Prostate gland (tissue), 2 donors: ENCODE measurements at regions of chr1 and their contacts with region 1.

Region 1: DNA sequence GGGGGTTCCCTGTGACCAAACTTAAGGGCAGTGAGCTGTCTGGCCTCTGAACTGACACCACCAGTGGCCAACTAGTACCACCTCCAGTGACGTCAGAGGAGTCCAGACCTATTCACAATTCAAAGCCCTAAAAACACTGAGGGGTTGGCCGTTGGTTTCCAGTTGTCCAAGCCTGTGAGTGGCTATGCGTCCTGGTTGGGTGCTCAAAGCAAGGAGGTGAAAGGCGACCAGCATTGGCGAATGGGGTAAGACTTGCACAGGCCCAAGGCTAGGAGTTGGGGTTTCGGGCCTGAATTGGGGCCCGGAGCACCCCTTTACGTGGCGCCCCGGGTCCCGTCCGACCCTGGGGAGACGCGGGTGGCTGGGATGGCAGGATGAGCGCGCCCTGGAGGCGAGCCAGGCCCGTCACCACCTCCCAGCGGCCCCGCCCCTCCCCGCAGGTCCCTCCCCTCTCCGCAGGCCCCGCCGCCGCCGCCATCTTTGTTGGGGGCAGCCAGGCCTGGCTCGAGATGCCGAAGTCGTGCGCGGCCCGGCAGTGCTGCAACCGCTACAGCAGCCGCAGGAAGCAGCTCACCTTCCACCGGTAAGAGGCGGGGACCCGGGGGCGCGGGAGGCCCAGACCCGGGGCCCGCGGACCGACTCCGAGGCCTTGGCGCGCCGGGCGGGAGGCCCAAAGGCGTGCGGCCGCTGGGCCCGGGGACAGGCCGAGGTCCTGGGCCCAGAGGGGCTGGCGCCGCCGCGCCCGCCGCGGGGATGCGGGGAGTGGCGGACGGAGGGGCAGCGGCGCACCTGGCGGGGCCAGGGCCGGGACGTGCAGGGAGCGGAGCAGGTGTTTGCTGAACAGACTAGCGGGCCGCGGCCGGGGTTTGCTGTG is at the start of gene THAP3:
- DNase-seq: peak; percentile 82
- H3K4me3 ChIP-seq: peak within 1 kb of the TSS; percentile 73 to 87
- H3K27ac ChIP-seq: peak within 1 kb of the TSS; percentile 89 to 92
- H3K4me1 ChIP-seq: peaks cover 6% of the 10 kb centered on the region
- H3K27me3 ChIP-seq: no peaks in the 10 kb centered on the region
- CTCF ChIP-seq: no peak
- POLR2A ChIP-seq: peak; percentile 42
- total RNA-seq, gene THAP3: 37.6 to 42.1 TPM

Region 2: GRCh38 chr1:6587261-6588005 is 37.5 kb before region 1 on chr1:
- intact Hi-C with region 1: loop called (anchors 5 kb)
- DNase-seq: peak; percentile 67
- H3K4me3 ChIP-seq: no peak overlapping the region
- H3K27ac ChIP-seq: peak overlapping the region; percentile 17 to 30
- H3K4me1 ChIP-seq: peaks cover 13% of the 10 kb centered on the region
- H3K27me3 ChIP-seq: no peaks in the 10 kb centered on the region
- CTCF ChIP-seq: no peak
- POLR2A ChIP-seq: peak; percentile 13

Region 3: DNA sequence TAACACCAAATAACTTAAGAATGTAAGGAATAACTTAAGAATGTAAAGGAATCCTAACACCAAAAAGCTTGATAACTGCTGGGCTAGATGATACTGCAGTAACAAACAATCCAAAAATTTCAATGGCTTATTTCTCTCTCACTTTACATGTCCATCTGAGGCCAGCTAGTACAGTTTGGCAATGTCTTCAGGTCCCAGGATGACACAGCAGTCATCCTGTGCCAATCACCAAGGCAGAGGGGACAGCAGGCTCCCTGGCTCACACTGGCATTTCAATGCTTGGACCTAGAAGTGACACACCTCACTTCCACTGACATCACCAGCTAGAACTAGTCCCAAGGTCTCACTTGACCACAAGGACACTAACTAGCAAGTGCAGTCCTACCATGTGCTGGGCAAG is 61.3 kb after region 1 on chr1:
- intact Hi-C with region 1: no loop called
- DNase-seq: no peak
- H3K4me3 ChIP-seq: no peak overlapping the region
- H3K27ac ChIP-seq: no peak overlapping the region
- H3K4me1 ChIP-seq: no peaks in the 10 kb centered on the region
- H3K27me3 ChIP-seq: no peaks in the 10 kb centered on the region
- CTCF ChIP-seq: no peak
- POLR2A ChIP-seq: no peak

Region 4: GRCh38 chr1:6801966-6802365 is 177.0 kb after region 1 on chr1:
- intact Hi-C with region 1: no loop called
- DNase-seq: no peak
- H3K4me3 ChIP-seq: no peak overlapping the region
- H3K27ac ChIP-seq: peak overlapping the region in 1 of 2 donors; percentile 64
- H3K4me1 ChIP-seq: peaks cover 3% of the 10 kb centered on the region
- H3K27me3 ChIP-seq: no peaks in the 10 kb centered on the region
- CTCF ChIP-seq: no peak
- POLR2A ChIP-seq: no peak